ENCODE measurements at regions of chr14 and their contacts with region 1.

Region 1: GRCh38 chr14:57199921-57200320 is 68.8 kb downstream of the EXOC5 start:
- DNase-seq: no peak
- H3K4me3 ChIP-seq: no peak overlapping the region
- H3K27ac ChIP-seq: no peak overlapping the region
- H3K4me1 ChIP-seq: no peaks in the 10 kb centered on the region
- H3K27me3 ChIP-seq: peaks cover 0 to 4% of the 10 kb centered on the region in 2 experiments
- CTCF ChIP-seq: no peak
- POLR2A ChIP-seq: no peak

Region 2: DNA sequence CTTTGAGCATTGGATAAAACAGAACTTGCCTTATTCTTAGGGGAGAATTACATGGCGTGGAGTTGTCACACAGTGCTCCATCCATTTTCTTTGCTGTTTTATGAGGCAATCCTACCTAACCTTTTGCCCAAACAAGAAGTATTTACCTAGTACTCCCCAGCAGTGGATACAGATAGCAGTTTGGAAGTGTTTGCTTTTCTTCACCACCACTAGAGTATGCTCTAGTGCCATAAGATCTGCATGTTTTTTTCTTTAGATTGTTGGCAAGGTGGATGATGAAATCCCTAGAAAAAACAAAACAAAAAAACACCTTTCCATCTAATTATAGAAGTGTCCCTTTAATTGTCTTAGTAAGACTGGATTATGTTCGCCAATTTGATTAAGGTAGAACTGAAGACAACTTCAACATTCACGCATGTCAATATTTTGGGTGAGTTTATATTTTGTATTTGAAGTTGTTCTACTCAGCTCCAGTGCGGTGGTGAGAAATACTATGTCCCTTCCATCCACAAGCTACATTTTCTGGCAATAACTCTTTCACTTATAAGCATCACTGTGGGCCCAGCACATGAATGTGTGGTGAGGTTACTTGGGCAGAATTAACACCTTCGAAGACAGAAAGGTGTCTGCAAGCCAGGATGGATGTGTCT is 643.9 kb before region 1 on chr14:
- CTCF ChIA-PET with region 1: no interaction called
- POLR2A ChIA-PET with region 1: no interaction called
- dilution Hi-C with region 1: no loop called
- intact Hi-C with region 1: loop called (anchors 5 kb)
- DNase-seq: peak; percentile 46
- H3K4me3 ChIP-seq: no peak overlapping the region
- H3K27ac ChIP-seq: no peak overlapping the region
- H3K4me1 ChIP-seq: no peaks in the 10 kb centered on the region
- H3K27me3 ChIP-seq: peaks cover 5 to 14% of the 10 kb centered on the region in 2 experiments
- CTCF ChIP-seq: peak; percentile 16 to 43
- POLR2A ChIP-seq: no peak